Activated naive CD4-positive, alpha-beta T cell treated with anti-CD3 and anti-CD28 coated beads for 36 hours (primary cell): ENCODE measurements at regions of chr3 and their contacts with region 1.

Region 1: GRCh38 chr3:94293793-94294195 is 230.9 kb downstream of the NSUN3 start:
- DNase-seq: no peak
- H3K4me3 Mint-ChIP-seq: no peak overlapping the region
- H3K27ac Mint-ChIP-seq: no peak overlapping the region
- H3K4me1 Mint-ChIP-seq: no peaks in the 10 kb centered on the region
- H3K27me3 Mint-ChIP-seq: no peaks in the 10 kb centered on the region

Region 2: GRCh38 chr3:94280958-94281357 is 12.8 kb before region 1 on chr3:
- CTCF ChIA-PET with region 1: no interaction called
- intact Hi-C with region 1: no loop called
- DNase-seq: no peak
- H3K4me3 Mint-ChIP-seq: no peak overlapping the region
- H3K27ac Mint-ChIP-seq: no peak overlapping the region
- H3K4me1 Mint-ChIP-seq: no peaks in the 10 kb centered on the region
- H3K27me3 Mint-ChIP-seq: no peaks in the 10 kb centered on the region

Region 3: GRCh38 chr3:94460931-94461330 is 167.1 kb after region 1 on chr3:
- CTCF ChIA-PET with region 1: no interaction called
- intact Hi-C with region 1: loop called (anchors 10 kb)
- DNase-seq: no peak
- H3K4me3 Mint-ChIP-seq: no peak overlapping the region
- H3K27ac Mint-ChIP-seq: no peak overlapping the region
- H3K4me1 Mint-ChIP-seq: no peaks in the 10 kb centered on the region
- H3K27me3 Mint-ChIP-seq: no peaks in the 10 kb centered on the region